Calu3 (cell line): ENCODE measurements at regions of chr12 and their contacts with region 1.

Region 1: GRCh38 chr12:75390899-75391538 is at the start of gene GLIPR1L2:
- DNase-seq: peak; percentile 99
- H3K4me3 Mint-ChIP-seq: peak within 1 kb of the TSS; percentile 89
- H3K27ac Mint-ChIP-seq: peak within 1 kb of the TSS; percentile 94
- H3K4me1 Mint-ChIP-seq: peaks cover 36% of the 10 kb centered on the region
- H3K27me3 Mint-ChIP-seq: no peaks in the 10 kb centered on the region
- CTCF ChIP-seq: peak; percentile 89
- total RNA-seq, gene GLIPR1L2: 0.76 TPM in 1 of 2 replicates, not detected in the other

Region 2: GRCh38 chr12:75334384-75335030 is 56.5 kb before region 1 on chr12 and contains the start of gene GLIPR1L1:
- CTCF ChIA-PET with region 1: interaction called, 9 read pairs
- intact Hi-C with region 1: loop called (anchors 2 kb)
- DNase-seq: peak; percentile 93
- H3K4me3 Mint-ChIP-seq: peak within 1 kb of the TSS; percentile 93
- H3K27ac Mint-ChIP-seq: peak within 1 kb of the TSS; percentile 87
- H3K4me1 Mint-ChIP-seq: peaks cover 11% of the 10 kb centered on the region
- H3K27me3 Mint-ChIP-seq: no peaks in the 10 kb centered on the region
- CTCF ChIP-seq: peak; percentile 92
- total RNA-seq, gene GLIPR1L1: not detected in 2 replicates

Region 3: GRCh38 chr12:75480469-75480949 is 89.5 kb after region 1 on chr12 and contains the start of gene GLIPR1:
- CTCF ChIA-PET with region 1: interaction called, 36 read pairs
- intact Hi-C with region 1: loop called (anchors 2 kb)
- DNase-seq: peak; percentile 55
- H3K4me3 Mint-ChIP-seq: peak within 1 kb of the TSS; percentile 29
- H3K27ac Mint-ChIP-seq: peak within 1 kb of the TSS; percentile 83
- H3K4me1 Mint-ChIP-seq: peaks cover 39% of the 10 kb centered on the region
- H3K27me3 Mint-ChIP-seq: no peaks in the 10 kb centered on the region
- CTCF ChIP-seq: no peak
- total RNA-seq, gene GLIPR1: 27.7 and 38.5 TPM in 2 replicates

Region 4: DNA sequence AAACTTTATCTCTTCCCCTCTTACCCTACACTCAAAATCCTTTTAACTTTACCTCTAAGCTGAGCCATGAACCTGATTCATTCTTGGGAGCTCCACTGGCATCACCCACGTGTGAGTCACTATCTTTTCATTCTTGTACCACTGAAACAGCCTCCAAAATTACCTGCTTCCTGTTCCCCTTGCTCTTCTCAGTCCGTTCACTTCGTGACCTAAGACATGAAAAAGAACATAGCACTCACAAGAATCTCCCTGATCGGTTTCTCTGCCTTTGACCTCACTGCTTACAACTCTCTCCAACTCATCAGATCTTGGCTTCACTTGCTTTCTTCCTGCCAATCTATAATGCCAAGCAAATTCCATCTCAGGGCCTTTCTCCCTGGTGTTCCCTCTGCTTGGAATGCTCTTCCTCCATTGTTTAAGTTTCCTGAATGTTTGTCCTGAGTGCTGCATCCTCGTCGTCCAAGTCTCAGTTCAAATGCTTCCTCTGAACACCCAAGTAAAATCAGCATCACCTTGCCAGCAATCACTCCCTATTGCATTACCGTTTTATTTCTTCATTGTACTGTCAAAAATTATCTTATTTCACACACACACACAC is 98.7 kb after region 1 on chr12:
- CTCF ChIA-PET with region 1: interaction called, 22 read pairs
- intact Hi-C with region 1: loop called (anchors 2 kb)
- DNase-seq: no peak
- H3K4me3 Mint-ChIP-seq: no peak overlapping the region
- H3K27ac Mint-ChIP-seq: no peak overlapping the region
- H3K4me1 Mint-ChIP-seq: peaks cover 11% of the 10 kb centered on the region
- H3K27me3 Mint-ChIP-seq: no peaks in the 10 kb centered on the region
- CTCF ChIP-seq: no peak

Region 5: DNA sequence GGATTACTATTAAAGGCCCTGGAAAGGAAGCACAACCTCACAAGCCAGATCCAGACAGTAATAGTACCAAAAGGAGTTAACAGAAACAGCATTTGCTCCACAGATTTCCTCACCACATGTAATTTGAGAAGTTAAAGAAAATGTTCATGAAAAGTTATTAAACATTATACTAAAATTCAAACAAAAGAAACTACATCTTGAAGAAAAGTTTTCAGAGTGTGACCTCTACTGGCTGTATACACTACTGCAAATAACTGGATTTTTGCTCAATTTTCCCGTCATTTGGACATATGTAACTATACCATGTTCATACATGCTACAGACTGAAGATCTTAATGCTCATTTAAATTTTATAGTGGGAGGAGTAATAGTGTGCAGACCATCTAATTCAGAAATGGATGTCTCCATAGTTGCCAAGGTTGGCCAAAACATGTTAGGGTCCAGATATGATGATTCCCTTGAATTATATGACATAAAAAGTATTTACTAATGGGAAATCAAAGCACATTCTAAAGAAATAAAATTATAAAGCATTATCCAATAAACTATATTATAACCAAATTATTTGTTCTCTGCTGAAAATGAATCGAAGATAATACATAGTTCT is 114.8 kb after region 1 on chr12:
- CTCF ChIA-PET with region 1: interaction called, 3 read pairs
- intact Hi-C with region 1: loop called (anchors 1 kb)
- DNase-seq: no peak
- H3K4me3 Mint-ChIP-seq: no peak overlapping the region
- H3K27ac Mint-ChIP-seq: no peak overlapping the region
- H3K4me1 Mint-ChIP-seq: peaks cover 10% of the 10 kb centered on the region
- H3K27me3 Mint-ChIP-seq: no peaks in the 10 kb centered on the region
- CTCF ChIP-seq: peak; percentile 52

Region 6: DNA sequence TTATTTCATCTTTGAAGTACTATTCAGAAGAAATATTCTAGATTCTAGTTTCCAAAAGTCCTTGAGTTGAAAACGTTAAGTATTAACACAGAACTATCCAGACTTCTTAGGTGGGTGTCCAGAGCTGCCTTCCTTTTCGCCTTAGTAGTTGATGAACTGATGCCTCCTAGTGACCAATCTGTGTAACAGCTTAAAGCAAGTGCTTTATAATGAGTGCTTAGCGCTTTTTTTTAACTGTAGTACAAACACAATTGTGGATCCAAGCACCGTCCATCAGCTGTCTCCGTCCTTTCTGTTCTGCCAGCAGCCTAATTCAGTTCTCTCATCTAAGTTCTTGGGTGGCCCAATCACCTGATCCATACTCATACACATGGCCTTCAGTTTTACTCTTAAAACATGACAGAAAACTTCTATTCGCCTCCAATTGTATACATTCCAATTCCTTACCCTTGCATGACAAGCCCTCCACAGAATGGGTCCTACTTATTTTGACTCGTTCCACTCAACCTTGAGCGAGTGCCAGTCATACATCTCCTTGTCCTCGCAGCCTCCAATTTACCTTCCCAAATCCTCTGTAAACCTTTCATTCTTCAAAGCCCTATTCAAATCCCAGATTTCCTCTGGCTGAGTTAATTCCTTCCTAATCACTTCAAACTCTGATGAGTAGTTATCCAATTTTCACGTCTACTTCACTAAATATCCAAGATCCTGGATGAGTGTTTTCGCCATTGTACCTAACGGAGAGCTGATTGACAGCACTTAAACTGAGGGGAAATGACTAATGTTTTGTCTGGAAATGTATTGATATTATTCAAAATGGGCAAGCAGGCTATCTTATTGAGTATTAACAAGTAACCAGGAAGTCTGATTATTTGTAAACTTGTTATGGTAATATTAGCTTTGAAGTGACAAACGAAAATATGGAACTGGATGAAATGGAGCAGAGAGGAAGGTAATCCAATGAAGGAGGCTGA is 646.4 kb after region 1 on chr12:
- CTCF ChIA-PET with region 1: interaction called, 11 read pairs
- intact Hi-C with region 1: no loop called
- DNase-seq: peak; percentile 52
- H3K4me3 Mint-ChIP-seq: peak overlapping the region; percentile 0
- H3K27ac Mint-ChIP-seq: peak overlapping the region; percentile 31
- H3K4me1 Mint-ChIP-seq: peaks cover 57% of the 10 kb centered on the region
- H3K27me3 Mint-ChIP-seq: no peaks in the 10 kb centered on the region
- CTCF ChIP-seq: peak; percentile 71